Activated naive CD4-positive, alpha-beta T cell treated with anti-CD3 and anti-CD28 coated beads, Interleukin-2, amount 10 ng/mL, durations not matched to agents 7 days and 5 days (primary cell): ENCODE measurements at regions of chr5 and their contacts with region 1.

Region 1: DNA sequence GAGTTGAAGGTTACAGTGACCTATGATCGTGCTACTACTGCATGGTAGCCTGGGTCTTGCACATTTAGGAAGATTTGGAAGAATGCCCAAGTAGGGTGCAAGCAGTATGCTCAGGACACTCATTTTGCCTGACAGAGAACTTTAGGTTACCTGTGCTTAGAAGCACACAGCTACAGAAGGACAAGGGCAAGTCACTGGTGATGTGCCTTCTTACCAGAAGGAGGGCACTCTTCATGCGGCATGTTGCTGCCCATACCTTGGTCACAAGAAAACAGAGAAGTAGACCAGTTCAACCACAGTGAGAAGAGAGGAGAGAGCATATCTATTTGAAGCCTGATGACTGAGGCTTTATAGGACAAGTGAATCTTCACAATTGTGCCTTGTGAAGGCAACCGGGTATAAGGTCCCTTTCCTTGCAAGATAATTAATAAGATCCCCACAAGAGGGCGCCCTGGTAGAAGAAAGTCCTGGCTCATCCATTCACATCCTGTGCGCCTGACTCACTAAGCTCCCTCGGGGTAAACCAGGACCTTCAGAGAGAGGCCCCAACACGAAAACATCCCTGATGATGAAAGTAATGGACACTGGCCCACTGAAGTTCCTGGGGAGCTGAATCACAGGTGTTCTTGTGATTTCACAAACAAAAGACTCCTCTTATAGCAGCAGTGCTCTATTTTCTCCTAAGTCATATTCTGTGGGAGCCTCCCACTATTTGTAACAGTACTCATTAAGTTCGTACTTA is 38.1 kb upstream of the STARD4 start:
- DNase-seq: peak; percentile 78
- H3K4me3 Mint-ChIP-seq: no peak overlapping the region
- H3K27ac Mint-ChIP-seq: no peak overlapping the region
- H3K4me1 Mint-ChIP-seq: peaks cover 18% of the 10 kb centered on the region
- H3K27me3 Mint-ChIP-seq: peaks cover 5% of the 10 kb centered on the region

Region 2: GRCh38 chr5:111401906-111402305 is 148.5 kb before region 1 on chr5:
- CTCF ChIA-PET with region 1: no interaction called
- DNase-seq: no peak
- H3K4me3 Mint-ChIP-seq: no peak overlapping the region
- H3K27ac Mint-ChIP-seq: no peak overlapping the region
- H3K4me1 Mint-ChIP-seq: no peaks in the 10 kb centered on the region
- H3K27me3 Mint-ChIP-seq: no peaks in the 10 kb centered on the region

Region 3: DNA sequence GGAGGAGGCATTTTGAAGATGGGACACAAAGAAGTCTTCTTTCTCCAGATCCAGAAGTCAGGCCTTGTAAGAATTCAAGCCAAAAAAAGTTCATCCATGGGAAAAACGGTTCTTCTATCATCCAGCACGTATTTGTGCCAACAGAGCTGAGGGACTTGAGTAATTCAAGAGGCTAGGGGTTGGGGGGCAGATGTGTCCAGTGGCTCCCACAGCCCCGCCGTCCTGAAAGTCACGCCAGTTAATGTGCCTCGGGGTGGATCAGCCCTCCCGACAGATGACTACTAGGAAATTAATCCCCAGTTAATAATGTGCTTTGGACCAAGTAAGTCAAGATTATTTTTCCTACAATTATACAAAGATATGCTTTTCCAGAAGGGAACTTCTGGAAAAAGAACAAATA is 183.1 kb after region 1 on chr5:
- CTCF ChIA-PET with region 1: no interaction called
- DNase-seq: no peak
- H3K4me3 Mint-ChIP-seq: no peak overlapping the region
- H3K27ac Mint-ChIP-seq: no peak overlapping the region
- H3K4me1 Mint-ChIP-seq: peaks cover 29% of the 10 kb centered on the region
- H3K27me3 Mint-ChIP-seq: no peaks in the 10 kb centered on the region

Region 4: DNA sequence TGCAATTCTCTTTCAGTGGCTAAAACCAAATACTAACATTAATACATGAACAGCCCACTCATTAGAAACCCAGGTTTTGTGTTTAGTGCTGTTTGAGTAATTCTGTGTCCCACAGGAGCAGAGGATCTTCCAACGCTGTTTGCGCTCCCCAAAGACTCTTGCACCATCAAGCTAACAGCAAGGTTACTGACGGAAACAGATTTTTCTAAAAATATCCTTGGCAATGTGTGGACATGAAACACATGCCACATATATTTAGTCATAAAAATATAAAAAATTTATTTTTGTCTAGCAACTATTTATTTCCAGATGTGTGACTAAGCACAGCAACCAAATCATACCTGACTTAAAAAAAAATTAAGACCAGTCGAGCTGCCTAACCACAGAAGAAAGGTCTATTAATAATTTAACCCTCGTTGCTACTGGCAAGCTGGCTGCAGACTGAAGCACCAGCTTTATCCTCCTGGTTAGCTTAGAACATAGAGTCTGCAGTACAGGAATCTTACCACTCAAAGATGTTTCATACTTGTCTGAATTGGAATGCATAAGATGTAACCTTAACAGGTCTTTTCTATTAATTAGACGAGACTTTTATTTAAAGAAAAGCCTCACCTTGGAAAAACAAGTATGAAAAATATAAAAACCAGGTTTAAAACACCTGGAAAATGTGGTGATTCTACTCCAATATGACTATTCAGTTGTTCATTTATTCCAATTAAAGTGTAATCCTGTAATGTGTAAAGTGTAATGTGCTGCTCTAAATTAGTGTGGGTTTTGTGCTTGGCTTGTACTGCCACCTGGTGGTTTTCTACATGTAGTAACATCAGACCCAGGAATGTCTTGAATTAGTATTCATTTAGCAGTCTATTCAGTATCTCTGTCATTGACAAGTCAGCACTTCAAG is 596.1 kb after region 1 on chr5:
- CTCF ChIA-PET with region 1: interaction called, 22 read pairs
- DNase-seq: peak; percentile 72
- H3K4me3 Mint-ChIP-seq: no peak overlapping the region
- H3K27ac Mint-ChIP-seq: no peak overlapping the region
- H3K4me1 Mint-ChIP-seq: no peaks in the 10 kb centered on the region
- H3K27me3 Mint-ChIP-seq: peaks cover 7% of the 10 kb centered on the region